Ascending aorta (tissue), 2 donors: ENCODE measurements at regions of chr1 and their contacts with region 1.

Region 1: DNA sequence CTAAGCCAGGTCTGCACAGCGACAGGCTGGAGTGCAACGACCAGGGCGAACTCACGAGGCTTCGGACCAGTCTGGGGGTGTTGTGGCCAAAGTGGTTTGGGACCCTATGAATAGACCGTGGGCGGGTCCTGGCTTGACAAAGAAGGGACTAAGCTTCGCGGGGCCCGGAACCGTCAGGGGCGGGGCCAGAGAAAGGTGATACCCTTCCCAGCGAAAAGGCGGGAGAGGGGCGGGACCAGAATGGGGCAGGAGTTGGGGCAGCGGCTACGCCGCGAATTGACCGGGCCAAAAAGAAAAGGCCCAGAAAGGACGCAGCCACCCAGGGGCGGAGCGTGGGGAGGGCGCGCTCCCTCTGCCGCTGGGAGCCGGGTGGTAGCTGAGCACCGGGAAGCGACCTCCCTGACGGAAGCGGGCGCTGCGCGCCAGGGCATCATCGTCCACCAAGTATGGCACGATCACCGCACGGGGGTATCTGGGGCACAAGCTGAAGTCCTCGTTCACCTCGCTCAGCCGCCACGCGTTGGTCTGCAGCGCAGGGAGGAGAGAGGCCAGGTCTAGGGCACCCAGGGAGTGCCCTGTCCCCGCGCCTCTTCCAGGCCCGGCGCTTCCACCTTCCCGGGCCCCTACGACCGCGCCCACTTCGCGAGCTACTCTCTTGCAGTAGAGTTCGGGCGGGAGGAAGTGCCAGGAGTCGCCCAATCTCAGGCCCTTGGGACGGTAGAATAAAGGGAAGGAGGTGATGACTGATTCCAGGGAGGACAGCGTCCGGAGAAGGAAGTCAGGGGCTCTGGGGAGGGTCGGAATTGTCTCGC is 6.7 kb upstream of the FAM167B start:
- DNase-seq: peak; percentile 51 to 92
- H3K4me3 ChIP-seq: peak overlapping the region; percentile 69 to 78
- H3K27ac ChIP-seq: peak overlapping the region; percentile 87 to 89
- H3K4me1 ChIP-seq: peaks cover 0 to 8% of the 10 kb centered on the region in 2 donors
- H3K27me3 ChIP-seq: no peaks in the 10 kb centered on the region
- CTCF ChIP-seq: peak in 2 of 3 experiments; percentile 30 to 35

Region 2: DNA sequence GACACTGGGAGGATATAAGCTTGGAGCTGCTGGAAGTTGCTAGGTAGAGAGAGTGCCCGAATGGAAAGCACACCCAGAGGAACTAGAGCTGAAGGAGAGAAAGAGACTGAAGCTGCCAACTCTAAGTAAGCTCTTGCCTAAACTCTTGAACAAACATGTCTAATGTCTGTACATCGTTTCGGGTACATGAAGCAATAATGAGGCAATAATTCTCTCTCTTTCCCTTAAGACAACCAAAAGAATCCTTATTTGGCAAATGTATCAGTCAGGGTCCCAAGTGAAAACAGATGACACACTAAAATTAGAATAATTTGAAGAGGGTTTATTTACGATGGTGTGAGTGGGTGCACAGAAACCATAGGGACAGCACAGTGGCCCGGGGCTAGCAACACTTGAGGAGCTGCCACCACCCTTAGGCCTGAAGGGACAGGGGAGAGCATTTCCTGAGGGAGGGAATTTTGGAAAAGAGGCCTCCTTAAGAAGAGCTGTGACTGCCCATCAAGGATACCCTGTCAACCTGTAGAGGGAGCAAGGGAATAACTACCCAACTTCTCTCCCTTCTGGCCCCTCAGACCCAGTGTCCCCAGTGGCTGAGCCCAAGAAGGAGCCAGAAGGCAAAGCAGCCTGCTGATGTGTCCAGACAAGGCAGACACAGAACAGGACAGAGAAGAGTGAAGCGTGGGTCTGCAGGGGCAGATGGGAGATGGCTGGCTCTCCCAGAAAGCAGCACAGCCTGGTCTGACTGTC is 262.8 kb before region 1 on chr1:
- intact Hi-C with region 1: no loop called
- DNase-seq: no peak
- H3K4me3 ChIP-seq: no peak overlapping the region
- H3K27ac ChIP-seq: no peak overlapping the region
- H3K4me1 ChIP-seq: no peaks in the 10 kb centered on the region
- H3K27me3 ChIP-seq: no peaks in the 10 kb centered on the region
- CTCF ChIP-seq: peak in 2 of 3 experiments; percentile 7 to 20

Region 3: DNA sequence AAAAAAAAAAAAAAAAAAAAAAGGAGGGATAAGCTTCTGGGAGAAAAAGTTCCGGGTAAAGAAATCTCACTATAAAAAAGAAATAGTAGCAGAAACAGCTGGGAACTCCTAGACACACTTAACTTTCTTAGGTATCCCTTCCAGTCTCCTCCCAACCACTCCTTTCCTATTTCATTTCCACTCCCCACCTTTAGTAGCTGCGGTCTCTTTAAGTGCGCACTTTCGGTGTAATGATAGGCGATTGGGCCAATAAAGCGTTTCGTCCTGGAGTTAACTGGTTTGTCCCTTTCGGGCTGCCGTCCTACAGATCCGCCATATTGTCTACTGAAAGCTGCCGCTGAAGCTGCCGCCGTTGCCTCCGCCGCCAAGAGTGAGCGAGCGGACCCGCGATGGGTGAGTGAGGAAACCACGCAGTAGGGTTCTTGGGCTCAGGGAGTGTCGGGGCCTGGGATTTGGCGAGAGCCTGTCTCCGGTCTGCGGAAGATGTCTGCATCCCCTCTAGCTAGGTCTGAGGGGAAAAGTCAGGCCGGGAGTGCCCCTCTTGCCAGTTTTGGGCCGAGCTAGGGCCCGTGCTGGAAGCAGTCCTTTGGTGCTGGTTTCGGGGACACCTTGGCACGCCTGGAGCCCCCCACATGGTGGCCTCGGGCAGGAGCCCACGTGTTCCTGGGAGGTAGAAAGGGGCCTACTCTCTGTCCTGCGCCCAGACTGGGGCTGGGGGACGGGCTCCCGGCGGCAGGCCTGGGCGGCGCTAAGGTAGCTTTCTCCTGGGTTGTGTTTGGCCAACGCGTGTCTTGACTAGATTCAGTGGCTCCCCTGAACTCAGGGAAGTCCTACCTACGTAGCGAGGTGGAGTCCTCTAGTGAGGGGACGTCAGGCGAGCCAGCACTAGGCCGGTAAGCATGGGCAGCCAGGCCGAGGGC is 132.3 kb before region 1 on chr1 and contains the start of gene KPNA6:
- intact Hi-C with region 1: loop called (anchors 5 kb)
- DNase-seq: peak; percentile 55 to 95
- H3K4me3 ChIP-seq: peak within 1 kb of the TSS; percentile 80 to 92
- H3K27ac ChIP-seq: peak within 1 kb of the TSS; percentile 87 to 92
- H3K4me1 ChIP-seq: peaks cover 4 to 38% of the 10 kb centered on the region in 2 donors
- H3K27me3 ChIP-seq: no peaks in the 10 kb centered on the region
- CTCF ChIP-seq: peak in 1 of 3 experiments; percentile 5
- total RNA-seq, gene KPNA6: 26.1 TPM

Region 4: DNA sequence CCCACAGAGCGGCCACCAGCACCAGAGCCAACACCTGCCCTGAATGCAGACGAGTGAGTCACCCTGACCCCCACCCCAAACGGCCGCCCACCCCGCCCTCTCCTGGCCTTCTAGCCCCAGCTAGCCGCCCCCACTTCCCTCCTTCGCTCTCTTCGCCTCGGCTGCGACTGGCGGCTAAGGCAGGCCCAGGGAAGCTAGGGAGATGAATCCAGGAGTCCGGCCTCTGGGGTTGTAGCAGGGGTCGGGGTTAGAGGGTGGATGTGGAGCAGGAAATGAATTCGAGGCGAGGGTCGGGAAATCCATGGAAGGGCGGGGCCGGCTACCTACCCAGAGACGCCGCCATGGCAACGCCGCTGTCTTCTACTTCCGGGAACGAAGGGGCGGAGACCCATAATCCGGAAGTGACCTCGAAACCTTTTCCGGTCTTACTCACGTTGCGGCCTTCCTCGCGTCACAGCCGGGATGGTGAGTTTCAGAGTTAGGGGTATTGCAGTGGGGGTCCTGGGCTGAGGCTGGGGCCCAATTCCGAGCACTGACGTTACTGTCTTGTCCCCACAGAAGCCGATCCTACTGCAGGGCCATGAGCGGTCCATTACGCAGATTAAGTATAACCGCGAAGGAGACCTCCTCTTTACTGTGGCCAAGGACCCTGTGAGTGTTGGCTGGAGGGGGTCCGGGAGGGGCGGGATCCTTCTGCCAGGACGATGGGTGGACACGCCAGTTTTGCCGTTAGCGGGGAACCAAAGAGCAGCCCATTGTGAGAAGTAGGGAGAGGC is 18.2 kb before region 1 on chr1 and contains the starts of genes EIF3I and TMEM234:
- intact Hi-C with region 1: loop called (anchors 1 kb)
- DNase-seq: peak; percentile 80 to 97
- H3K4me3 ChIP-seq: peak within 1 kb of the TSS; percentile 87 to 97
- H3K27ac ChIP-seq: peak within 1 kb of the TSS; percentile 81 to 97
- H3K4me1 ChIP-seq: peaks cover 19% of the 10 kb centered on the region in 2 donors
- H3K27me3 ChIP-seq: no peaks in the 10 kb centered on the region
- CTCF ChIP-seq: no peak
- total RNA-seq, gene EIF3I: 234 TPM
- total RNA-seq, gene TMEM234: 4.0 TPM

Region 5: GRCh38 chr1:32303997-32304622 is 63.8 kb after region 1 on chr1:
- intact Hi-C with region 1: no loop called
- DNase-seq: no peak
- H3K4me3 ChIP-seq: no peak overlapping the region
- H3K27ac ChIP-seq: no peak overlapping the region
- H3K4me1 ChIP-seq: no peaks in the 10 kb centered on the region
- H3K27me3 ChIP-seq: no peaks in the 10 kb centered on the region
- CTCF ChIP-seq: no peak

Region 6: DNA sequence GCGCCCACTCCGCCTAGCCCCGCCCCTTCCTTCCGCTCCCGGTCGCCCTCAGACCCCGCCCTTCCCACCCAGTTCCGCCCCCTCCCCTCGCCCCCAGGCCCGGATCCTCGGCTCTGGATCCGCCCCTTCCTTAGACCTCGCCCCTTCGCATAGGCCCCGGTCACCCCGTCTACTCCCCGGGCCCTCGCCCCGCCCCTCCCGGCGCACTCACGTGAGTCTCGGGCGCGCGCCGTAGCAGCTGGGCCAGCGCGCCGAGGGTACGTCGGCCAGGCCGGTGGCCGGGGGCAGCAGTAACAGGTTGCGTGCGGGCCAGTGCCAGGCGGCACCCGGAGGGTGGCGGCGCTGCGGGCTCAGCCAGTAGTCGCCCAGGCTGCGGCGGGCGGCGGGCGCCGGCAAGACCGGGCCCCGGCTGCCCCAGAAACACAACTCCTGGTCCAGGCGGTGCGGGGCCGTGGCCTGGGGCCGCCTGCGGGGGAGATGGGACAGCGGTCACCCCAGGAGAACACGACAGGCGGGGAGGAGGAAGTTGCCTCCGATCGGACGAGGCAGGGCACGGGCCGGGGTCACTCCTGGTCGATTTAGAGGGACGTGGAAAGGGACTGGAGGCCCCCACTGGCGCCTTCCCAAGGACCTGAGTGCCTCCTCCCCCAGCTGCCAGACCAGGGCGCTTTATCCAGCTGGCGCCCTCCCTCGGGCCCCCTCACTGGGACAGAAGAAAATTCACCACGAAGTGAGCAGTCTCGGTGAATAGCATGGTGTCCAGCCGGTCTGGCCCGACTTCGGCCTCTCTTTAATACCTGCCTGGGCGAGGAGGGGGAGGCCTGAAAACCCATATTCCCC is 111.3 kb after region 1 on chr1:
- intact Hi-C with region 1: loop called (anchors 1 kb)
- DNase-seq: peak; percentile 76 to 97
- H3K4me3 ChIP-seq: peak overlapping the region; percentile 76 to 82
- H3K27ac ChIP-seq: peak overlapping the region; percentile 81 to 84
- H3K4me1 ChIP-seq: peaks cover 12 to 29% of the 10 kb centered on the region in 2 donors
- H3K27me3 ChIP-seq: no peaks in the 10 kb centered on the region
- CTCF ChIP-seq: peak in 1 of 3 experiments; percentile 6

Region 7: DNA sequence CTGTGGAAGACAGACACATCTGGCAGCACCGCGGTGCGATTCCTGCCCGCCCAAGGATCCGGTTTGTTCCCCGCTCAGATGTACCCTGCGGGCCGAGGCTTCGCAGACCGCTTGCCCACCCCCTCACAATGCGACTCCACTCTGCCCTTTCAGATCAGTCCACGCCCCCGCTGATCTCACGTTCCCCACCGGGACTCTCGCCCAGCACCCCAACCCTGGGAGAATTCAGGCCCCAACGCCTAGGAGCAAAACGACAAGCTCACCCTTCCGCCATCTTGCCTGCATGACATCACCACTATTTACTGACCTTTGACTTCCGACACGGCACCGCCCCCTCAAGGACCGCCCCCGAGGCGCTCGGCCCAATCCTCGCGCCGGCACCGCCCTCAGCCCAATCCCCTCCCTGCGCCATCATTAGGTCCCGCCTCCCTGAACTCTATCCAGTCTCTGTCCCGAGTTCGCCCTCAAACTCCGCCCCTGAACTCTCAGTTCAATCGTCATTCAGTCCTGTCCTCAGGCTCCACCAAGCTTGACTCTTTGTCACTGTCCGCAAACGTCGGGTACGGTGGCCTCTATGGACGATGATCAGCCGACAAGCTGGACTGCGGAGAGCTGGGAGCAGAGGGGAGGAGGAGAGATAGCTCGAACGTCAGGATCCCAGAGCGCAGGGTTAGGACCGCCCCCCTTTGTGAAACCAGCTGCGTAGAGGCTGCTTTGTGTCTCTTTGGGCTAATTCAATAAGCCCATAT is 154.0 kb after region 1 on chr1 and contains the start of gene BSDC1:
- intact Hi-C with region 1: no loop called
- DNase-seq: peak; percentile 97 to 99
- H3K4me3 ChIP-seq: peak within 1 kb of the TSS; percentile 72 to 86
- H3K27ac ChIP-seq: peak within 1 kb of the TSS; percentile 87 to 95
- H3K4me1 ChIP-seq: peaks cover 9 to 24% of the 10 kb centered on the region in 2 donors
- H3K27me3 ChIP-seq: no peaks in the 10 kb centered on the region
- CTCF ChIP-seq: no peak
- total RNA-seq, gene BSDC1: 56.1 TPM